ENCODE measurements at regions of chr9 and their contacts with region 1.

Region 1: GRCh38 chr9:87557996-87558395 is 60.3 kb downstream of the DAPK1 start:
- H3K4me3 Mint-ChIP-seq: no peak overlapping the region
- H3K27ac Mint-ChIP-seq: peak overlapping the region; percentile 88
- H3K4me1 Mint-ChIP-seq: peaks cover 80% of the 10 kb centered on the region
- H3K27me3 Mint-ChIP-seq: no peaks in the 10 kb centered on the region

Region 2: DNA sequence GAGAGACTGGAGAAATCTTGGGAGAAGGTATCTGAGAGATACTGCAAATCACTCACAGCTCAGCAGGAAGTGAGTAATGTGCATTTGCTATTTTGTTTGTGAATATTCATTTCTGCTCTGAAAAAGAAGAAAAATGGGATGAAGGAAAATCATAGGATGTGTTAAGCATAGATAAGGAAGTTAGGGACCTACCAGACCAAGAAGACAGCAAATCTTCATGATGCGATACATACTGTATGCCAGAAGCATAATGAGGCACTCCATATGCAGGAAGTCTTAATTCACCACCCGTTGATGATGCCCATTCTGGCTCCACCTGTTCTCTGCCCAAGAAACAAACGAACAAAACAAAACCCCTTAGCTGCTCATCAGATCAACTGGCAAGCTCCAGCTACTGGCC is 66.5 kb before region 1 on chr9:
- intact Hi-C with region 1: no loop called
- H3K4me3 Mint-ChIP-seq: no peak overlapping the region
- H3K27ac Mint-ChIP-seq: no peak overlapping the region
- H3K4me1 Mint-ChIP-seq: peaks cover 47% of the 10 kb centered on the region
- H3K27me3 Mint-ChIP-seq: peaks cover 1% of the 10 kb centered on the region

Region 3: GRCh38 chr9:87535817-87536539 is 22.0 kb before region 1 on chr9:
- intact Hi-C with region 1: no loop called
- H3K4me3 Mint-ChIP-seq: no peak overlapping the region
- H3K27ac Mint-ChIP-seq: peak overlapping the region; percentile 21
- H3K4me1 Mint-ChIP-seq: peaks cover 36% of the 10 kb centered on the region
- H3K27me3 Mint-ChIP-seq: no peaks in the 10 kb centered on the region

Region 4: DNA sequence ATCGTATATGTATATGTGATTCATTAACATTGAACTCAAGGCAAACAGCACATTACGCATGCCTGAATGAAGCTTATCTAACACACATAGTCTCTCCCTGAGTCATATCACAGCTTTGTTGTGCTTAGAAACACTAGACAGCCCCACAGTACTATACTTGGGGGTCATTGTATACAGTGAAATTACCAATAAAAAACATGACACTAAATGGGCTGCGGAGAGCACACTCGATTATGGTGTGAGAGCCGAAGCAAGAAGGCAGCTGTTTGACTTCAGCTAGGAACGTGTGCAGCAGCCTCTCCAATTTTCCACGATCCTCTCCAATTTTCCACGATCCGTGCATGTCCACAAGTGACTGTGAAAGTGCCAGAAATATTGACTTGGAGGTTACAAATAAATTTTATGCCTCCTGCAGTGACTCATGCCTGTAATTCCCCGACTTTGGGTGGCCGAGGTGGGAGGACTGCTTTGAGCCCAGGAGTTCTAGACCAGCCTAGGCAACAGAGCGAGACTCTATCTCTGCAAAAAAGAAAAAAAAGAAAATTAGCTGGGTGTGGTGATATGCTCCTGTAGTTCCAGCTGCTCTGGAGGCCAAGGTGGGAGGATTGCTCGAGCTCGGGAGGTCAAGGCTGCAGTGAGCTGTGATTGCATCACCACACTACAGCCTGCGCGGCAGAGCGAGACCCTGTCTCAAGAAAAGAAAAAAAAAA is 42.1 kb after region 1 on chr9:
- intact Hi-C with region 1: loop called (anchors 5 kb)
- H3K4me3 Mint-ChIP-seq: no peak overlapping the region
- H3K27ac Mint-ChIP-seq: peak overlapping the region; percentile 79
- H3K4me1 Mint-ChIP-seq: peaks cover 87% of the 10 kb centered on the region
- H3K27me3 Mint-ChIP-seq: no peaks in the 10 kb centered on the region

Region 5: DNA sequence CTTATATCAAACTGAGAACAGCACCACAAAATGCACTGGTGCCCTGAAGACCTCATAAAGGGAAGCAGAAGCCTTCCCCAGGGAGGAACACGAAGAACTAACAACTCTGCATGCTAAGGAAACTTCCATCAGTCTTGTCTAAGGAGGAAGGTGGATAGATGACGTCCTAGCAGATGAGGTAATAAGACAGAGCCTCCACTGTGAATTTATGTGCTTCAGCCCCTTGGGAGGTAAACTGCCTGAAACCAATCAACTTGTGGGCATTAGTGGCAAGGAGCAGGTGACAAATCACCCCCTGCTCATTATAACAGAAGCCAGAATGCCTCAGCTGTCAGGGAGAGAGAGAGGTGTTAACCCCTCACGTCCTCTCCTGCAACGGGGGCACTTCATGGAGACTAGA is 781.3 kb after region 1 on chr9:
- intact Hi-C with region 1: no loop called
- H3K4me3 Mint-ChIP-seq: no peak overlapping the region
- H3K27ac Mint-ChIP-seq: no peak overlapping the region
- H3K4me1 Mint-ChIP-seq: peaks cover 23% of the 10 kb centered on the region
- H3K27me3 Mint-ChIP-seq: no peaks in the 10 kb centered on the region

Measured in dendritic cell treated with granulocyte-macrophage colony-stimulating factor and Interleukin-4, amounts not matched to agents 40 ng/mL and 50 ng/mL, for 4 days (primary cell).